ENCODE measurements at regions of chr9 and their contacts with region 1.

Region 1: DNA sequence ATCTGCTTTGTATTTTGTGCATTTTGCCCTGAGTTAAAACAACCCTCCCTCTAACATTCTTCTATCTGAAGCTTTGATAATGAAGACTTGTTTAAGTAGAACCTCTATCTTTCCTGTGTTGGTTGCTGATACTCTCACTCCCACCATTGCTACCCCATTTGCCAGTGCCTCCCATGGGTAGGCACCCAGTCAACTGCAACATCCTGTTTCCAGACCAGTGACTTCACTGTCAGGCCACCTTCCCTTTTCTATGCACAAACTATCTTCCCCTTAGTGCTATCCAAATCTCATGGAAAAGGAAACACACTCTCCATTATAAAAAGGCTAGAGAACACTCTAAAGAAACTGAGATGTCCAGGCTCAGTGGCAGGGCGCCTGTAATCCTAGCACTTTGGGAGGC is 5.6 kb upstream of the IARS1 start:
- DNase-seq: peak; percentile 66
- ATAC-seq: peak; percentile 90
- H3K4me3 ChIP-seq: no peak overlapping the region
- H3K4me3 Mint-ChIP-seq: peak overlapping the region; percentile 50
- H3K27ac ChIP-seq: peak overlapping the region; percentile 29 to 74
- H3K27ac Mint-ChIP-seq: peak overlapping the region; percentile 84
- H3K4me1 ChIP-seq: peaks cover 27 to 29% of the 10 kb centered on the region in 2 donors
- H3K4me1 Mint-ChIP-seq: peaks cover 47% of the 10 kb centered on the region
- H3K27me3 ChIP-seq: no peaks in the 10 kb centered on the region
- H3K27me3 Mint-ChIP-seq: no peaks in the 10 kb centered on the region
- CTCF ChIP-seq: no peak

Region 2: DNA sequence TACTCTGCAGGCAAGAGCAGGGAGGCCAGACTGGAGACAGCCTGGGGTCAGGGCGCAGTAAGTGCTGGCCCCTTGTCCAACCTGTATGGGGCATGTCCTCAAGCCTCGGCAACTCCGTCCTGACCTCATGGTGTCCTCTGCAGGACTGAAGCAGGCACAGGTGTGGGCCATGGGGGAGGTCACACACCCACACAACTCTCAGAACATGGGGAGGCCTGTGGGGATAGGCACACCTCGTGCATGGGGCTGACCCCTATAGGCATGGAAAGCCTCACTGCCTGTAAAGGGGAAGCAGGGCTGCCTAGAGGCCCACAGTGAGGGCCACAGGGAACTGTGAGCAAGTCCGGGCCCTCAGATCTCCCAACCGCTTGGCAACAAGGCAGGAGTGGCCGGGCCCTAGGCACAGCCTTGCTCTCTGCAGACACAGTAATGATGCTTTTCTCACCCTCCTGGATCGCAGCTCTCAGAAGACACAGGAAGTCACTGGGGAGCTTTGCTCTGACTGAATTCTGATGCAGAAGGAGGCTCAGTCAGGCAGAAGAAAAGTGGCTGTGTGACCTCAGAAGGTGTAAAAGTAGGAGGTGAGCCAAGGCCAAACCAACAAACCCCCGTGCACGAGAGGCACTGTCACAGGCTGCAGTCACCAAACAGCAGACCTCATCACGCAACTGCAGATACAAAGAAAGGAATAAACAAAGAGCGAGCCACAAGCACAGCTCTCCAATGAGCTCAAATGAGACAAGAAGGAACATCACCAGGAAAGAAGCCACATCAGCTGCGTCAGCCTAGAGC is 365.4 kb after region 1 on chr9:
- CTCF ChIA-PET with region 1: no interaction called
- POLR2A ChIA-PET with region 1: no interaction called
- intact Hi-C with region 1: loop called (anchors 2 kb)
- DNase-seq: no peak
- ATAC-seq: no peak
- H3K4me3 ChIP-seq: no peak overlapping the region
- H3K4me3 Mint-ChIP-seq: no peak overlapping the region
- H3K27ac ChIP-seq: no peak overlapping the region
- H3K27ac Mint-ChIP-seq: no peak overlapping the region
- H3K4me1 ChIP-seq: peaks cover 11 to 16% of the 10 kb centered on the region in 2 donors
- H3K4me1 Mint-ChIP-seq: peaks cover 35% of the 10 kb centered on the region
- H3K27me3 ChIP-seq: no peaks in the 10 kb centered on the region
- H3K27me3 Mint-ChIP-seq: no peaks in the 10 kb centered on the region
- CTCF ChIP-seq: no peak